Sigmoid colon (tissue), 7 donors: ENCODE measurements at regions of chr17 and their contacts with region 1.

Region 1: GRCh38 chr17:2215616-2216364 is 87.8 kb downstream of the SMG6 start:
- DNase-seq: peak; percentile 89
- H3K4me3 ChIP-seq: peak overlapping the region in 1 of 4 donors; percentile 32
- H3K27ac ChIP-seq: peak overlapping the region; percentile 72 to 87 (median 84)
- H3K4me1 ChIP-seq: peaks cover 0 to 57% (median 51%) of the 10 kb centered on the region in 4 donors
- H3K27me3 ChIP-seq: no peaks in the 10 kb centered on the region
- CTCF ChIP-seq: no peak
- EP300 ChIP-seq: peak in 1 of 4 donors; percentile 38
- POLR2A ChIP-seq: no peak

Region 2: GRCh38 chr17:1197781-1198490 is 1017.9 kb before region 1 on chr17:
- intact Hi-C with region 1: no loop called
- DNase-seq: peak; percentile 92
- H3K4me3 ChIP-seq: no peak overlapping the region
- H3K27ac ChIP-seq: peak overlapping the region; percentile 44 to 63 (median 58)
- H3K4me1 ChIP-seq: peaks cover 0 to 5% (median 0%) of the 10 kb centered on the region in 4 donors
- H3K27me3 ChIP-seq: peaks cover 0 to under 1% (median 0%) of the 10 kb centered on the region in 3 donors
- CTCF ChIP-seq: no peak
- EP300 ChIP-seq: no peak
- POLR2A ChIP-seq: no peak

Region 3: GRCh38 chr17:2179615-2180295 is 36.0 kb before region 1 on chr17:
- intact Hi-C with region 1: loop called (anchors 2 kb)
- DNase-seq: peak; percentile 96
- H3K4me3 ChIP-seq: no peak overlapping the region
- H3K27ac ChIP-seq: peak overlapping the region; percentile 82 to 95 (median 86)
- H3K4me1 ChIP-seq: peaks cover 0 to 94% (median 90%) of the 10 kb centered on the region in 4 donors
- H3K27me3 ChIP-seq: no peaks in the 10 kb centered on the region
- CTCF ChIP-seq: no peak
- EP300 ChIP-seq: peak in 3 of 4 donors; percentile 55 to 65 (median 61)
- POLR2A ChIP-seq: no peak